ENCODE measurements at regions of chr1 and their contacts with region 1.

Region 1: DNA sequence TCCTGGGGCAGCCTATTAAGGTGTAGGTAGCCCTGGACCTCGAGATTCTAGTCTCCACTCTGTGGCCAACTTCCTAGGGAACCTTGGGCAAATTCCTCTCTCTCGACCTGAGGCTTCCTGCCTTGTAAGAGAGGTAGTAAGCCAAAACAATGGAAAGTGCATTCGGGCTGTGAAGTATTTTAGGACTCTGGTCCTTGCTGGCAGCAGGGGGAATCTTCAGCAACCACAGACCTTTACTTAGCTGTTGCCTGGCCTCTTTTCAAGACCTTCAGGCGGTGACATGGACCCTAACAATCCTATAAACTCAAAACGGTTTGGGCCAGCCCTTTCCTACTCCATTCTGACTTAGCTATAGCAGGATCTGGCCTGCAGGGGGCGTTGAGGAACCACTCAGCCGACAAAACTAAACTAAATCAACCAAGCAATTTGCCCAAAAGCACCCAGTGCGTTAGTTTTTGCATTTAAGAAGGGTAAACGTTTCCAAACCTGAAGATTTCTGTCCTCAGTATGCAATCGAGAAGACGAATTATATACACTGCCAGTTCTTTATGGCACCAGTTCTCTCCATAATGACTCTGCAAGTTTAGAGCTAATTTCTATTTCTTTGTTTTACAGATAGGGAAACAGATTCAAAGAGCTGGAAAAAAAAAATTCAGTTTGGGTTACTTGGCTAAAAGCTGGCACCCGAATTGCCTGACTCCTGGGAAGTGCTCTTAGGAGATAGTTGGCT is 10.9 kb upstream of the SESN2 start:
- DNase-seq: peak; percentile 66 to 95 (median 82)

Region 2: DNA sequence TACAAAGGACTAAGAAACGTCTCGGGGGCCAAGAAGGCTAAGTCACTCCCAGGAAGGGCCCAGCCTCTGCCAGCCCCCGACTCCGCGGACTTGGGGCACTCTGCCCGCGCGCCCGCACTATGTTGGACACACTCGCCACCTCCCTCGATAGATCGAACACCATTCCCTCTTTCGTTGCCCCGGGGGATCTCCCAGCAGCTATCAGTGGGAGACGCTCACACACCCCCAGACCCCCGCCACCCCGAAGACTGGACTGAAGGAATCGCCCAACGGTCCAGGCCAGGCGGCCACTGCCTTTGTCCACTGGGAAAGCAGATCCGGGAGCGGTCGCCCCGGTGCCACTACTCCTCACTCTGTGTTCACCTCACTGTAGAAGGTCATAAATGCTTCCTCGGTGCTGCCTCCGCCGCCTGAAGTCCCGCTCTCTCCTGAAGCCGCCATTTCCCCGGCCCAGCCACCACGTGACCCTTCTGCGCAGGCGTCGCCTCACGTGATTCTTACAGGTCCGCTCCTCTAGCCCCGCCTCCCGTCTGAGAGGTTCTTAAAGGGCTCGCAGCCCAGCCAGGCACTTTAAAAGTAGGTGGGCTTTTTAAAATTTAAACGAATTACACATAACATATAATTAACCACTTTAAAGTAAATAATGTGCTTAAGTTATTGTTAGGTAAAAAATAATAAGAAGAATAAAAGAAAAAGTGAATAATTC is 15.7 kb before region 1 on chr1 and contains the start of gene DNAJC8:
- intact Hi-C with region 1: loop called (anchors 2 kb)
- DNase-seq: peak; percentile 91 to 99 (median 98)

Region 3: DNA sequence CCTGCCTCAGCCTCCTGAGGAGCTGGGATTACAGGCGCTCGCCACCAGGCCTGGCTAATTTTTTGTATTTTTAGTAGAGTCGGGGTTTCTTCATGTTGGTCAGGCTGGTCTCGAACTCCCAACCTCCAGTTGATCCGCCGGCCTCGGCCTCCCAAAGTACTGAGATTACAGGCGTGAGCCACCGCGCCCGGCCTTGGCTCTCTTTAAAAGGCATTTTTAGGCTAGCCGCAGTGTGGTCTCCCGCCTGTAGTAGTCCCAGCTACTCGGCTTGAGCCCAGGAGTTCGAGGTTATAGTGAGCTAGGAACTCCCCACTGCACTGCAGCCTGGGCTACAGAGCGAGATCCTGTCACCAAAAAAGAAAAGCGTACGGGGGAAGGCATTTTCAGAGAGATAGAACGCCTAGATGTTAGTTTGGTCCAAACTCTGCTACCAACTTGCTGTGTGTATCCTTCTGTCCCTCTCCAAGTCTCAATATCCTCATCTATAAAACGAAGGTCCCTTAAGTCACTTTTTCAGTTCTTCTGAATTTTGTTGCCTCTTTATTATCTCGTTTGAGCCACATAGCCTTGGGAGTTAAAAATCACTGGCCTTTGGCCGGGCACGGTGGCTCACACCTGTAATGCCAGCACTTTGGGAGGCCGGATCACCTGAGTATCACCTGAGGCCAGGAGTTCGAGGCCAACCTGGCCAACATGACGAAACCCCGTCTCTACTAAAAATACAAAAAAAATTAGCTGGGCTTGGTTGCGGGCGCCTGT is 81.1 kb after region 1 on chr1:
- intact Hi-C with region 1: loop called (anchors 5 kb)
- DNase-seq: peak in 6 of 10 donors; percentile 6 to 76 (median 10)

Region 4: DNA sequence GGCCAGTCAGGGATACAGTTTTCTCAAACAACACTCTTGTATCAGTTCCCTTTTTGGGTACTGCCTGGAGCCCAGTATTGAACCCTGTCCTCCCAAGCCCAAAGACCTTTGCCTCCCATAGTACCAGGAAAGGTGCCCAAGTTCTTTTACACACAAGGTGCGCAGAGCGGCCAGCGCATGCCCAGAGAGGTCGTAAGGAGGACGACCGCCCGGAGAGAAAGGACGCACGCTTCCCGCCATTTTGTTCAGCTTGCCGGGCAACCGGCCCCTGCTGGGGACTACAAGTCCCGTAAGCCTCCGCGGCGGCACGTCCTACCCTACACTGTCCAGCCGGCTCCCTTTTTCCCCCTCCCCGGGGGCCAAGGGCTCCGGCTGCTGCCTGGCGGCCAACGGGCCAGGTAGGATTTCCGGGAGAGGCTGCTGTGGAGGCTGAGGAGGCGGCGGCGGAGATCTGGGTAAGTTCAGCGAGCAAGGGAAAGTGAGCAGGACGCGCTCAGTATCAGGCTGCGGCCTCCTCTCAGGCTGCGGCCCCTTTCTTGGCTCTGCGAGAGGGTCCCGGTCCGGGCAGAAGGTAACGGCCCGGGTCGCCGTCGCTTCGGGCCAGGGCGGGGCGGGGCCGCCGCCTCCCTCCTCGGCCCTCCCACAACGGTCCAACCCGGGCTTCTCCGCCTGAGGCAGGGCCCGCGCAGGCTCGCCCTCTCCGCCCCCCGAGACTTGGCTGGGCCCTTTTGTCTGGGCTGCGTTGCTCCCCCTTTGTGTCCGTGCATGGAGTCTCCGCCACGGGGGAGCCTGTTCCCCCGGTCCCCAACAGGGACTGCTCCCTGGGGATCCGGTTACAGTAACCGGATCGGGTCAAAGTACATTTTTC is 121.2 kb after region 1 on chr1 and contains the start of gene PHACTR4:
- intact Hi-C with region 1: loop called (anchors 10 kb)
- DNase-seq: peak; percentile 81 to 99 (median 90)

Region 5: DNA sequence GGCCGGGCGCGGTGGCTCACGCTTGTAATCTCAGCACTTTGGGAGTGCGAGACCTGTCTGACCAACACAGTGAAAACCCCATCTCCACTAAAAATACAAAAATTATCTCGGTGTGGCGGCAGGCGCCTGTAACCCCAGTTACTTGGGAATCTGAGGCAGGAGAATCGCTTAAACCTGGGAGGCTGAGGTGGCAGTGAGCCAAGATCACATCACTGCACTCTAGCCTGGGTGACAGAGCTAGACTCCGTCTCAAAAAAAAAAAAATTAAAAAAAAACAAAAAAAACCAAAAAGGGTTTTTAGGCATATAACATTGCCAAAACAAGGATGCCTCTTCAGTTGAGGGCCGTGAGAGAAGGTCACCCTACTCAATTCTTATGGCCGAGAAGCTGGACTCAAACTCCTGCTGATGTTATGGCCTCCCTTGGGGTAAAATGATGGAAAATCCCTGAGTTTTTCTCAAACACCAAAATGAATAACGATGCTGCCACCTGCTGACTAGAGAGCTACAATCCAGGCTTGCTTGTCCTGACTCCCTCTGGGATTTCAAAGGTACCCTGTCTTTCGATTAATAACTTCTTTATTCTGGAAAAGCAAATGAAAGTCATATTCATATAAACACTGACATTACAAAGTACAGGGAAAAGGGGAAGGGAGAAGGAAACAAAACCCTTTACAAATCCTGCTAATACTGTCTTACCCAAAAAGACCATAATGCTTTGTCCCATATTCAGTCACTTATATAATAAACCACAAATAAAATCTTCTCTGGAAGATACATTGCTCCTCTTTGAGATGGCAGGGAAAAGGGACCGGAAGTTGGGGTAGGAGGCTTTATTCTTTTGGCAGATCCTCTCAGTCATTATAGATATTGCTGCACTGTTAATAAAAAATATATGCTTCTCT is 354.3 kb after region 1 on chr1:
- intact Hi-C with region 1: loop called (anchors 5 kb)
- DNase-seq: peak in 6 of 10 donors; percentile 55 to 84 (median 66)

Measured in posterior cingulate gyrus (tissue), 11 donors.